ENCODE measurements at regions of chr15 and their contacts with region 1.

Region 1: DNA sequence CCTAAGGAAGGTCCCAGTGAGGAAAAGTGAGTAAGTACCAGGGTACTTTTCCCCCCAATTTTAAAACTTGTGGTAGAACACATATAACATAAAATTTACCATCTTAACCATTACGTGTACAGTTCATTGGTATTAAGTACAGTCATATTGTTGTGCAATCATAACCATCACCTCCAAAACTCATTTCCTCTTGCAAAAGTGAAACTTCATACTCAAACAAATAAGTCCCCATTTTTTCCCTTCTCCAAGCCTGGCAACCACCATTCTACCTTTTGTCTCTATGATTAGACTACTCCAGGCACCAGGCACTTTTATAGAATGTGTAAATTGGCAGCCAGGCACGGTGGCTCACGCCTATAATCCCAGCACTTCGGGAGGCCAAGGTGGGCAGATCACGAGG is 12.2 kb downstream of the PRC1 start:
- DNase-seq: no peak
- H3K4me3 Mint-ChIP-seq: no peak overlapping the region
- H3K27ac Mint-ChIP-seq: peak overlapping the region; percentile 51
- H3K4me1 Mint-ChIP-seq: peaks cover 41% of the 10 kb centered on the region
- H3K27me3 Mint-ChIP-seq: no peaks in the 10 kb centered on the region

Region 2: GRCh38 chr15:90954712-90955671 is 27.1 kb before region 1 on chr15 and contains the start of gene RCCD1:
- CTCF ChIA-PET with region 1: interaction called, 12 read pairs
- POLR2A ChIA-PET with region 1: no interaction called
- DNase-seq: peak; percentile 94
- H3K4me3 Mint-ChIP-seq: peak within 1 kb of the TSS; percentile 89
- H3K27ac Mint-ChIP-seq: peak within 1 kb of the TSS; percentile 96
- H3K4me1 Mint-ChIP-seq: peaks cover 28% of the 10 kb centered on the region
- H3K27me3 Mint-ChIP-seq: no peaks in the 10 kb centered on the region
- total RNA-seq, gene RCCD1: 30.8 to 35.9 TPM

Region 3: GRCh38 chr15:90961902-90962420 is 20.2 kb before region 1 on chr15:
- CTCF ChIA-PET with region 1: interaction called, 12 read pairs
- POLR2A ChIA-PET with region 1: no interaction called
- DNase-seq: no peak
- H3K4me3 Mint-ChIP-seq: no peak overlapping the region
- H3K27ac Mint-ChIP-seq: no peak overlapping the region
- H3K4me1 Mint-ChIP-seq: peaks cover 7% of the 10 kb centered on the region
- H3K27me3 Mint-ChIP-seq: no peaks in the 10 kb centered on the region